Activated CD4-positive, alpha-beta memory T cell treated with anti-CD3 and anti-CD28 coated beads, Interleukin-2, amount 10 ng/mL, durations not matched to agents 7 days and 5 days (primary cell): ENCODE measurements at regions of chr5 and their contacts with region 1.

Region 1: DNA sequence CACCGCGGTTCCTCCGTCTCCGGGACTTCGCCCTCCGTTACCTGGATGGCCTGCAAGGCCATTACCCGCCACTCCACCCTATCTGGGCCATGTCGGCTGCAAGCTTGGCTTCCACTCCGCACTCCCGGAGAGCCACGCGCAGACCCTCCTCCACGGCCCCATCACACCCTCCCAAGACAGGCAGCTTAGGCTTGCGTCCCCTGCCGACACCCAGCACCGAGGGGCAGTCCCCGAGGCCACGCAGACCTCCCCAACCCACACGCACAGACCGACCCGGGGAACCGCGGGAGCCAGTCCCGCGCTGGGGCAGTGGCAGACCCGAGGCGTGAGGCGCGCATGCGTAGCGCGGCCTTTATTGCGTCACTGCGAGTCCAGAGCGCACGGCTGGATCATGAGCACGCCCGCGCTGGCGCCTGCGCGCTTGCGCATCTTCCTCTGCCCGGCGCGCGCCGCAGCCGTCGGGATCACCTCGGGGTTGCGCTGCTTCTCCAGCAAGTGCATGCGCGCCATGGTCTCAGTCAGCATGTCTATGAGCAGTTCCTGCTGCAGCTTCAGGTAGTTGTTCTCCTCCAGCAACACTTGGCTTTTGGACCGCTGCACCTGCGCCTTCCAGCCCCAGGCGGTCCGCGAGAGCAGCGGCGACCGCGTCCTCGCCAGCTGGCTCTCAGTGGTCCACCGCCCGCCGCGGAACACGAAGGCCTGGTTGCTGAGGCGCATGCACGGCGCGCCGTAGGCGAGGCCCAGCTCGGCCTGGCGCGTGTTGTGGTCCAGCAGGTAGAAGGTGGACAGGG is 2.4 kb downstream of the CBY3 start:
- DNase-seq: peak; percentile 96
- H3K4me3 Mint-ChIP-seq: peak overlapping the region; percentile 99
- H3K27ac Mint-ChIP-seq: peak overlapping the region; percentile 94
- H3K4me1 Mint-ChIP-seq: peaks cover 41% of the 10 kb centered on the region
- H3K27me3 Mint-ChIP-seq: no peaks in the 10 kb centered on the region

Region 2: GRCh38 chr5:179378441-179379271 is 299.8 kb before region 1 on chr5:
- CTCF ChIA-PET with region 1: no interaction called
- POLR2A ChIA-PET with region 1: no interaction called
- DNase-seq: no peak
- H3K4me3 Mint-ChIP-seq: no peak overlapping the region
- H3K27ac Mint-ChIP-seq: no peak overlapping the region
- H3K4me1 Mint-ChIP-seq: no peaks in the 10 kb centered on the region
- H3K27me3 Mint-ChIP-seq: no peaks in the 10 kb centered on the region

Region 3: GRCh38 chr5:179668391-179668790 is 10.0 kb before region 1 on chr5:
- CTCF ChIA-PET with region 1: interaction called, 12 read pairs
- POLR2A ChIA-PET with region 1: interaction called, 20 read pairs
- DNase-seq: peak; percentile 54
- H3K4me3 Mint-ChIP-seq: no peak overlapping the region
- H3K27ac Mint-ChIP-seq: no peak overlapping the region
- H3K4me1 Mint-ChIP-seq: peaks cover 3% of the 10 kb centered on the region
- H3K27me3 Mint-ChIP-seq: no peaks in the 10 kb centered on the region

Region 4: DNA sequence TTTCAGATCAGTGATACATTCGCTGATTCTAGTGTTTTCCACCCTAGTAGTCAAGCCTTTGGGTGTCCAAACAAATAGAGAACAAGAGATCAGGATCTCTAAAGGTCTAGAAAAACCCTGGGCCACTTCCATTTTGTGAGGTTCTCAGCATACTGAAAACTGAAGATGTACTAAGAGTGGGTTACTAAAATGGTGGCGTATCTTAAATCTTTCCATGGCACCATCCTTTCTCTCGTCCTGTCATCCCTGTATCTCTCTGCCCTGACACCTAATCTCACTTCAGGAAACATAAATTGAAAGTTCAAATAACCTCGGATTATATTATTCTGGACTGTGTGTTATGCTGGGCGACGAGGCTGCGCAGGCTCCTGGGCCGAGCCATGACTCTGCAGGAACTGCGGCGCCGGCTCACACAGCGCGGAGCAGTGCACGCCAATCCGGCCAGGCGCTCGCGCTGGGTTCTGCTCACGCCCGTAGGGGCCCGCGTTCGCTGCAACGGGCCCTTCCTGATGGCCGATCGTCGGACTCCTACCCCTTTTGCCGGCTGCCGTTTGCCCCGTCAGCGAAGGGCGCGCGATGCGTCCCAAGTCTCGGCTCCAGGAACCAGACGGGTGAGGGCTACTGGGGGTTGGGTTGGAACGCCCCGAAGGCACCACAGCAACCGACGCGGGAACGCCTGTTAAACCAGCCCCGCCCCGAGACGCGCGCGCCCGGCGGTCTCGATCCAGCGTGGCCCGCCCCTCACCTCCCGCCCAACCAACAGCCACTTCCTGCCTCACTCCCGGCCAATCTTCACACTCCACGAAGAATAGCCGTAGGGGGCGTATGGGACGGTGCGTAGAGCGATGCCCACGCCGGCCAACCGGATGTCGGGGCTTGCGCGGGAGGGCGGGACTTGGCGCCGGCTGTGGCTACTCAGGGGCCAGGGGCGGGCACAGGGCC is 19.8 kb after region 1 on chr5:
- CTCF ChIA-PET with region 1: interaction called, 6 read pairs
- POLR2A ChIA-PET with region 1: interaction called, 82 read pairs
- DNase-seq: peak; percentile 99
- H3K4me3 Mint-ChIP-seq: peak overlapping the region; percentile 99
- H3K27ac Mint-ChIP-seq: peak overlapping the region; percentile 98
- H3K4me1 Mint-ChIP-seq: peaks cover 40% of the 10 kb centered on the region
- H3K27me3 Mint-ChIP-seq: no peaks in the 10 kb centered on the region

Region 5: DNA sequence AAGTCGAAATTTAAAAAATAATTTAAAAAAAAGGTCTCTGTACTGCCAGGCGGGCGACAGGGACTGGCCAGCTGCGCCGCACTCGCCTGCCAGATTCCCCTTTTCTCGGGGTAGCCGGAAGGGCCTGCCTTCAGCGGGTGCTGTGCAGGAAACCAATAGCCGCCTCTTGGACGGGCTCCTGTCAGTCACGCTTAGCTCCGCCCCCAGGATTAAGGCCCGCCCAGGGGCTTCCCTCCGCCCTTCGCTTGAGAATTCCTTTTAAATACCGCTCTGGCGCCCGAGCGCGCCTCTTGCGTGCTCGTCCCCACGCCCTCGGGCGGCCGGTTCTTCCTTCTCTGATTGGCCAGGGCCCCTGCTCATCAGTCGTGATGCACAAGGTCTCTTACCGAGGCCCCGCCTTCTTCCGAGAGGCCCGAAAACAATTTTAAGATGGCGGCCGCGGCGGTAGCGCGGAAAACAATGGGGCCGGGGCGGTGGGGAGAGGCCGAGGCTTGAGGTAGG is 54.0 kb after region 1 on chr5 and contains the start of gene MAML1:
- CTCF ChIA-PET with region 1: interaction called, 10 read pairs
- POLR2A ChIA-PET with region 1: interaction called, 11 read pairs
- DNase-seq: peak; percentile 100
- H3K4me3 Mint-ChIP-seq: peak within 1 kb of the TSS; percentile 96
- H3K27ac Mint-ChIP-seq: peak within 1 kb of the TSS; percentile 87
- H3K4me1 Mint-ChIP-seq: peaks cover 37% of the 10 kb centered on the region
- H3K27me3 Mint-ChIP-seq: no peaks in the 10 kb centered on the region
- total RNA-seq, gene MAML1: 33.3 to 35.2 TPM

Region 6: DNA sequence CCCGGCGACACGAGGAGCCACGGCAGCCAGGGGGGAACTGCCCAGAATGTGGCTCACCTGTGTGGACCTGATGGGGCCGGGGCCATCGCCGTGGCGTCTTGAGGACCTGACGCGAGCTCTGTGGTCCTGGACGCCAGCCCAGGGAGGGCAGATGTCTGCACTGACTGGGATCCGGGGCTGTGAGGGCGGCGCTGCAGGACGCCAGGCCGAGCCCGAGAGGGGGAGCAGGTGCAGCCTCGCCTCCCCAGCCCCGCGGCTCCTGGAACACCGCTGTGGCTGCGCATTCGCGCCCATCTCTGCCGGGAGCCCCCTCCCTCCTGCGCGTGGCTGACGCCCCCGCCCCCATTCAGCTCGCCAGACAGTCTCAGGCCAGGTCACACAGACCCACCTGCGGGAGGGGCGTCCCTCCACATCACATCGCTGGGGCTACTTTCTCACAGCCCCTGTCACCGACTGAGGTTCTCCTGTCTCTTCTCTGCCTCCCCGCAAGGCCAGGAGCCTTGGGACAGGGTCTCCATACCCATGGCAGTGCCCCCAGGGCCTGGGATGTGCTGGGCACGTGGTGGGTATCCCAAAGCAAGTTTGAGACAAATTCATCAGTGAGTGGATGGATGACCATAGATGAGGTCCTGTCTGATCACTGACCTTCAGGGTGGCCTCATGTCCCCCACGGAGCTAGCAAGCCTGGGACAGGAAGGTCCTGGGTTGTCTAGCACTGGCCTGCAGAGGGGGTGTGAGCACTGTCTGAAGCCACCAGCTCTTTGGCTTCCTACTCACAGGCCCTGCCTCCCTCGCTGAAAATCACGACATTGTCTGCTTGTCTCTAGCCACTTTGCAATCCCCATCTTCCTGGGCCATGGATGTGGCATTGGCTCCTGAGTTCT is 483.2 kb after region 1 on chr5:
- CTCF ChIA-PET with region 1: no interaction called
- POLR2A ChIA-PET with region 1: no interaction called
- DNase-seq: no peak
- H3K4me3 Mint-ChIP-seq: no peak overlapping the region
- H3K27ac Mint-ChIP-seq: no peak overlapping the region
- H3K4me1 Mint-ChIP-seq: no peaks in the 10 kb centered on the region
- H3K27me3 Mint-ChIP-seq: peaks cover 21% of the 10 kb centered on the region